Testis (tissue), 5 donors: ENCODE measurements at regions of chr5 and their contacts with region 1.

Region 1: GRCh38 chr5:180467041-180467440 is 27.1 kb upstream of the CNOT6 start:
- DNase-seq: no peak
- H3K4me3 ChIP-seq: no peak overlapping the region
- H3K27ac ChIP-seq: no peak overlapping the region
- H3K4me1 ChIP-seq: no peaks in the 10 kb centered on the region
- H3K27me3 ChIP-seq: no peaks in the 10 kb centered on the region
- CTCF ChIP-seq: no peak
- POLR2A ChIP-seq: no peak

Region 2: GRCh38 chr5:180296771-180297170 is 170.3 kb before region 1 on chr5:
- intact Hi-C with region 1: loop called (anchors 5 kb)
- DNase-seq: no peak
- H3K4me3 ChIP-seq: no peak overlapping the region
- H3K27ac ChIP-seq: no peak overlapping the region
- H3K4me1 ChIP-seq: peaks cover 7% of the 10 kb centered on the region
- H3K27me3 ChIP-seq: no peaks in the 10 kb centered on the region
- CTCF ChIP-seq: no peak
- POLR2A ChIP-seq: no peak